KBM-7 (cell line): ENCODE measurements at regions of chr16 and their contacts with region 1.

Region 1: GRCh38 chr16:77236063-77236511 is 36.9 kb downstream of the SYCE1L start:
- DNase-seq: peak; percentile 85

Region 2: DNA sequence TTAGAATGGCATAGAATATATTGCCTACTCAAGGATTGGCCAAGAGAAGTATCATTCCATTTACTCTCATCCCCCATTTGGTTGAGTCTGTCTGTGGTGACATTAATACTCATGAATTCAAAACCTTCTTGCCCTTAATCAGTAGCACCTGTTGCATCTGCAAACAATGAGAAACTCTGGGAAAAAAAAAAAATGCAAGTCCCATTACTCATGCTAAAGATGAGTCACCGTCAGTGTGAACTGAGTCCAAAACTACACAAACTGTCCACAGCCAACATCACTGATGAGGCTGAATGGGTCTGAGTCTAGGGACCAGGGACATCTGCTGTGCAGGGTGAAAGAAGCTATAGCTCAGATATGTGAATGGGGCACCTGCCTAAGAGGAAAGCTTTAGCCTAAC is 295.7 kb after region 1 on chr16:
- in situ Hi-C with region 1: no loop called
- DNase-seq: no peak

Region 3: DNA sequence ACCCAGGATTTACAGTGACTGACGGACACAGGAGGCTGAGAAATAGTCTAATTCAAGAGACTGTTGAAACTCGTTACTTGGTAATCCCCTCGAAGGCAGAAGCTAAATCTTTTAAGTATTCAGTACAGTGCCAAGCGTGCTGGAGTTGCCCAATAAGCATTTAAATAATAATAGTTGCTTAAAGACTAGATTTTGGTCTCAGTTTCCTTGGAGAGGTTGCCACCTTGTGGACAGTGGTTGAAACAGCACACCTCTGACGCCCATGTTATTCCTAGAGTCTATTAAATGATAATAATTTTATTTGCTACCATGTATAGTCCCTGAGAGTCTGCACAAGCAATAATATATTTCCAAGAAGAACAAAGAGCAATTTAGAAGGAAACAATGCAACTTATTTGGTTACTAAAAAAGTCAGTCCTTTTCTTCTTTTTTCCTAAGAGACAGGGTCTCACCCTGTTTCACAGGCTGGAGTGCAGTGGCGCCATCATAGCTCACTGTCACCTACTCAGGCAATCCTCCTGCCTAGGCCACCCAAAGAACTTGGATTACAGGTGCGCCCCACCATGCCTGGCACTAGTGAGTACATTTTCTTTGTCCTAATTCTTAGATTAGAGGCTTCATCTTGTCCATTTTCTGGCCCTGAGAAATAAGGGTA is 348.2 kb after region 1 on chr16:
- in situ Hi-C with region 1: loop called (anchors 25 kb)
- DNase-seq: peak; percentile 57

Region 4: GRCh38 chr16:77993111-77993985 is 757.3 kb after region 1 on chr16:
- in situ Hi-C with region 1: loop called (anchors 25 kb)
- DNase-seq: no peak